ENCODE measurements at regions of chr15 and their contacts with region 1.

Region 1: DNA sequence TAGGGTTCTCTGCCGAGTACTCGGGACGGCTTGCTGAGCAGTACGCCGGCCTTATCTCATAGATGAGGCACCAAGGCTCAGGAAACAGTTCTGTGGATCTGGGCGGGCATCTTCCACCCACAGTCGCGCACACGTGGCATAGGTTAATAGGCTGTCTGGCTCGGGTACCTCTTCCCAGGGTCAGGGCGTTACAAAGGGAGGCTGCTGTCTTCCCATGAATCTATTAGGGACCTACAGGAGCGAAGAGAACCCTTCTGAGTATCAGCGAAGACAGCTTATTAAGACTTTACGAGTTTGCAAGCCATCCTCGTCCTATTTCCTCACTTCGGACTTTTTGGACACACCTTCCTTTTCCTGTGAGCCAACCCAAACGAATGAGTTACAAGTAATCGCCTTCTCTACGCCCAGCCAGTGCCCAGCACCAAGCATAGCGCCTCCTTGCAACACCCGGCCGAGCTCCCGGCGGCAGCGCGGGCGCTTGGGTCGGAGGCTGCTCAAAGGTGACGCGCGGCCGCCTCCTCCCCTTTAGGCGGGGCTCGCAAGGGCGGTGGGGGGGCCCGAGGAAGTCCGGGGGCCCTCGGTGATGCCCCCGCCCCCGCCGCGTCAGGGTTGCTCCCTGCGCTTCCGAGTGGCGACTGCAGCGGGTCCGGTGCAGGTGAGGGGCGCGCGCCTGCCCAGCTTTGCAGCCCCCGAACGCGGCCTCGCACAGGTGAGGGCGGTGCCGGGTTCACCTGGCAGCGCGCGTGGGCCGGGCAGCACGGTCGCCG is at the start of gene MCTP2:
- DNase-seq: peak; percentile 57
- ATAC-seq: peak; percentile 87
- H3K4me3 ChIP-seq: peak within 1 kb of the TSS; percentile 61
- H3K27ac ChIP-seq: no peak within 1 kb of the TSS
- H3K4me1 ChIP-seq: peaks cover 16% of the 10 kb centered on the region
- H3K27me3 ChIP-seq: peaks cover 0 to 7% of the 10 kb centered on the region in 2 experiments; a peak in 2 of 4 replicates
- CTCF ChIP-seq: peak in 2 of 3 experiments; percentile 4 to 33; a peak in 2 of 6 replicates
- EP300 ChIP-seq: no peak
- POLR2A ChIP-seq: peak; percentile 52; the same call in 1 of the 2 replicates
- RAD21 ChIP-seq: no peak
- polyA plus RNA-seq, gene MCTP2: 0.24 to 0.26 TPM

Region 2: GRCh38 chr15:94080418-94080817 is 150.7 kb before region 1 on chr15:
- CTCF ChIA-PET with region 1: no interaction called
- POLR2A ChIA-PET with region 1: no interaction called
- RAD21 ChIA-PET with region 1: no interaction called
- SMC1A ChIA-PET with region 1: no interaction called
- in situ Hi-C with region 1: no loop called
- intact Hi-C with region 1: no loop called
- DNase-seq: no peak
- ATAC-seq: peak; percentile 83
- H3K4me3 ChIP-seq: no peak overlapping the region
- H3K27ac ChIP-seq: no peak overlapping the region
- H3K4me1 ChIP-seq: no peaks in the 10 kb centered on the region
- H3K27me3 ChIP-seq: peaks cover 0 to 2% of the 10 kb centered on the region in 2 experiments; a peak in 2 of 4 replicates
- CTCF ChIP-seq: no peak
- EP300 ChIP-seq: no peak
- POLR2A ChIP-seq: no peak
- RAD21 ChIP-seq: no peak

Region 3: DNA sequence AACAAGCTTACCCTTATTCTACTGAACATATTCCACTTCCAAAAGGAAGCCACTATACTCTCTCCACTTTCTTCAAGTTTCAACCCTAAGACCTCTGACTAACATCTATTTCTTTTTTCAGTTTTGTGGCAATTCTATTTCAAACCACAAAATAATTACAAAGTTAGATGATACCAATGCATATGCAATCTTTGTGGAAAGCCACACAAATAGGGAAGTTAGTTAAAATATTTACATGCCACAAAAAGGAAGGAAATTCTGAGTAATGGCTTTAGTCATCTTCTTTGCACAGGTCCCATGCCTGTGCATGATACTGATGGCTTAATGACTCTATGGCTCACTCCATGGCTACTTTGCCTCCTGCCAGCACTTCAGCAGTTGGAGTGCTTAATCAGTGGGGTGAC is 56.7 kb before region 1 on chr15:
- CTCF ChIA-PET with region 1: interaction called, 10 read pairs
- POLR2A ChIA-PET with region 1: no interaction called
- RAD21 ChIA-PET with region 1: interaction called, 5 read pairs
- SMC1A ChIA-PET with region 1: interaction called, 4 read pairs
- in situ Hi-C with region 1: no loop called
- intact Hi-C with region 1: no loop called
- DNase-seq: peak; percentile 30
- ATAC-seq: peak; percentile 95
- H3K4me3 ChIP-seq: no peak overlapping the region
- H3K27ac ChIP-seq: no peak overlapping the region
- H3K4me1 ChIP-seq: no peaks in the 10 kb centered on the region
- H3K27me3 ChIP-seq: no peaks in the 10 kb centered on the region
- CTCF ChIP-seq: no peak
- EP300 ChIP-seq: 0 out of 4 replicates have a peak, but pooled peaks have one; percentile 27 to 38
- POLR2A ChIP-seq: no peak
- RAD21 ChIP-seq: no peak

Region 4: GRCh38 chr15:94253742-94254141 is 22.6 kb after region 1 on chr15:
- CTCF ChIA-PET with region 1: interaction called, 10 read pairs
- POLR2A ChIA-PET with region 1: interaction called, 10 read pairs
- RAD21 ChIA-PET with region 1: interaction called, 63 read pairs
- SMC1A ChIA-PET with region 1: interaction called, 83 read pairs
- in situ Hi-C with region 1: no loop called
- intact Hi-C with region 1: no loop called
- DNase-seq: no peak
- ATAC-seq: peak; percentile 83
- H3K4me3 ChIP-seq: no peak overlapping the region
- H3K27ac ChIP-seq: no peak overlapping the region
- H3K4me1 ChIP-seq: no peaks in the 10 kb centered on the region
- H3K27me3 ChIP-seq: no peaks in the 10 kb centered on the region
- CTCF ChIP-seq: no peak
- EP300 ChIP-seq: no peak
- POLR2A ChIP-seq: no peak
- RAD21 ChIP-seq: no peak

Region 5: DNA sequence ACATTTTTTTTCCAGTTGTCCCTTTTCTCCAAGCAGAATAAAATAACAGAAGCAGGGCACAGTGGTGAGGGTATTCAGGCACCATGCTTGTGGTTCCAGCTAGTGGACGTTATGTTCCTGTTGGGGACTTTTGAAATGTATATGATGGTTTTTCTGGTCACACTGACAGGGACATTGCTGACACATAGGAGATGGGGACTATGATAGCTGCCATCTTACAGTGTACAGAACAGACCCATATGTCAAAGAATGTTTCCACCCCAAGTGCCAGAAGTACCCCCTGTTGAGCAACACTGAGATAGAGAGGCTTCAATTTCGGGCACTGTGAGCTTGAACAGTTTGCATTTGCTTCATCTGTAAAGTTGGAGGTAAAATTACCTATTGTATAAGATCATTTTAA is 38.8 kb after region 1 on chr15:
- CTCF ChIA-PET with region 1: interaction called, 6 read pairs
- POLR2A ChIA-PET with region 1: interaction called, 23 read pairs
- RAD21 ChIA-PET with region 1: interaction called, 52 read pairs
- SMC1A ChIA-PET with region 1: interaction called, 57 read pairs
- in situ Hi-C with region 1: no loop called
- intact Hi-C with region 1: no loop called
- DNase-seq: no peak
- ATAC-seq: no peak
- H3K4me3 ChIP-seq: no peak overlapping the region
- H3K27ac ChIP-seq: no peak overlapping the region
- H3K4me1 ChIP-seq: no peaks in the 10 kb centered on the region
- H3K27me3 ChIP-seq: no peaks in the 10 kb centered on the region
- CTCF ChIP-seq: no peak
- EP300 ChIP-seq: no peak
- POLR2A ChIP-seq: no peak
- RAD21 ChIP-seq: no peak

Region 6: DNA sequence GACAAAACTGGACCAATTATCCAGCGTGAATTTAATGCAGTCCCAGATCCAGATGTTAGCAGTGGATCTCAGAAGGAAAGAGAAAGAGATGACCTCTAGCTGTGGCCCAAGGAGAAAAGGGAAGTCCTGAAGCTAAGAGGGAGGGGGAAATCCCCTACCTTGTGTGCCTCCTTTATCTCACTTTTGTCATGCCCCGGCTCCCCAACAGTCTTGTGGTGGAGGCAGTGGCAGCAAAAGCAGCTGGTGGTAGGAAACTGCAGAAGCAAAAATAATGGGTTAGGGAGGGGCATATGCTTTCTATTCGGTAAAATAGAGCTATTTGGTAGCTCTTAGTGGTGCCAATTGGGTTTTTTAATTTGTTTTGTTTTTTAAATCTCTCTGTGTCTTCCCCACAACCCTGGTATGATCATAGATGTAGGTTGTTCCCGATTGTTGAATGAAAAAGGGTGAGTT is 56.7 kb after region 1 on chr15:
- CTCF ChIA-PET with region 1: interaction called, 62 read pairs
- POLR2A ChIA-PET with region 1: interaction called, 94 read pairs
- RAD21 ChIA-PET with region 1: interaction called, 120 read pairs
- SMC1A ChIA-PET with region 1: interaction called, 156 read pairs
- in situ Hi-C with region 1: no loop called
- intact Hi-C with region 1: loop called (anchors 5 kb)
- DNase-seq: peak; percentile 66
- ATAC-seq: peak; percentile 97
- H3K4me3 ChIP-seq: no peak overlapping the region
- H3K27ac ChIP-seq: peak overlapping the region; percentile 47; the same call in 1 of the 2 replicates
- H3K4me1 ChIP-seq: peaks cover 15% of the 10 kb centered on the region
- H3K27me3 ChIP-seq: no peaks in the 10 kb centered on the region
- CTCF ChIP-seq: peak in 1 of 3 experiments; percentile 18; a peak in 1 of 6 replicates
- EP300 ChIP-seq: peak; percentile 74 to 91; a peak in 3 of 4 replicates
- POLR2A ChIP-seq: no peak
- RAD21 ChIP-seq: no peak

Region 7: GRCh38 chr15:94306700-94307650 is 75.8 kb after region 1 on chr15:
- CTCF ChIA-PET with region 1: interaction called, 25 read pairs
- POLR2A ChIA-PET with region 1: interaction called, 25 read pairs
- RAD21 ChIA-PET with region 1: interaction called, 62 read pairs
- SMC1A ChIA-PET with region 1: interaction called, 104 read pairs
- in situ Hi-C with region 1: loop called (anchors 5 kb)
- intact Hi-C with region 1: loop called (anchors 2 kb)
- DNase-seq: peak; percentile 78
- ATAC-seq: peak; percentile 91
- H3K4me3 ChIP-seq: no peak overlapping the region
- H3K27ac ChIP-seq: no peak overlapping the region
- H3K4me1 ChIP-seq: peaks cover 13% of the 10 kb centered on the region
- H3K27me3 ChIP-seq: no peaks in the 10 kb centered on the region
- CTCF ChIP-seq: no peak
- EP300 ChIP-seq: peak; percentile 94 to 96
- POLR2A ChIP-seq: no peak
- RAD21 ChIP-seq: no peak

Region 8: GRCh38 chr15:94671858-94672532 is 440.9 kb after region 1 on chr15:
- CTCF ChIA-PET with region 1: no interaction called
- POLR2A ChIA-PET with region 1: no interaction called
- RAD21 ChIA-PET with region 1: no interaction called
- SMC1A ChIA-PET with region 1: no interaction called
- in situ Hi-C with region 1: no loop called
- intact Hi-C with region 1: no loop called
- DNase-seq: no peak
- ATAC-seq: no peak
- H3K4me3 ChIP-seq: no peak overlapping the region
- H3K27ac ChIP-seq: no peak overlapping the region
- H3K4me1 ChIP-seq: no peaks in the 10 kb centered on the region
- H3K27me3 ChIP-seq: no peaks in the 10 kb centered on the region; a peak in 1 of 4 replicates
- CTCF ChIP-seq: no peak
- EP300 ChIP-seq: no peak
- POLR2A ChIP-seq: no peak
- RAD21 ChIP-seq: no peak